MCF 10A (cell line): ENCODE measurements at regions of chr19 and their contacts with region 1.

Region 1: DNA sequence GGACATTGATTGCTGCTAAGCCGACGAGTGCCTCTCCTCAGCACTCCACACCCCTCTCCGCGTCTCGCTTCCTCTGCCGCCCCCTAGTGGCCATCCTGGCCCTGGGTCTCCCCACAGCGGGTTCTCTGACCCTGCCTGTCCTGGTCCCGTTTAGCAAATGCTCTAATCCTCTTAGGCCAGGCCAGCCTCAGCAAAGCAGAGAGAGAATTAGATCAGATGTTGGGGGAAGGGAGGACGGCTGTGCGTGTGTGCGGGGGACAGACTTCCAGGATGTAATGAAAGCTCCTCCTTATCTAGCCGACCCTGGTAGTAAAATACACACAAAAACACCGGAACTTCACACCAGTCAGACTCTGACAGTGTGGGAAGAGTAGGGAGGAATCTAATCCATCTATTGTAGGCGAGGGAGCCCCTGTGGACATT is 4.5 kb downstream of the TPRX2 start:
- DNase-seq: peak; percentile 85
- H3K4me3 Mint-ChIP-seq: no peak overlapping the region
- H3K27ac Mint-ChIP-seq: no peak overlapping the region
- H3K4me1 Mint-ChIP-seq: no peaks in the 10 kb centered on the region
- H3K27me3 Mint-ChIP-seq: no peaks in the 10 kb centered on the region
- CTCF ChIP-seq: peak; percentile 93

Region 2: DNA sequence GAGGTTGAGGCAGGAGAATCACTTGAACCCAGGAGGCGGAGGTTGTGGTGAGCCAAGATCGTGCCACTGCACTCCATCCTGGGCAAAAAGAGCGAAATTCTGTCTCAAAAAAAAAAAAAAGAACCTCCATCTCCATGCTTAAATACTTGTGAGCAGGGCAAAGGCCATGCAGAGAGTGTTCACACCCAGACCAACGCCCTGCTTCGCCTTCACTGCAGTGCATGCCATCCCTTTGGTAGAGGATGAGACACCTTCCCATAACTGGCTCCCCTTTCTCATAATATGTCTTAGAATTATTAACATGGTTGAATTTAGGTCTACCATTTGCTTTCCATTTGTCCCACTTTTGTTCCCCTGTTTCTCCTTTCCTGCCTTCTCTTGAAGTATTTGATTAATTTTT is 647.9 kb before region 1 on chr19:
- CTCF ChIA-PET with region 1: no interaction called
- POLR2A ChIA-PET with region 1: no interaction called
- intact Hi-C with region 1: no loop called
- DNase-seq: no peak
- H3K4me3 Mint-ChIP-seq: no peak overlapping the region
- H3K27ac Mint-ChIP-seq: no peak overlapping the region
- H3K4me1 Mint-ChIP-seq: peaks cover 4% of the 10 kb centered on the region
- H3K27me3 Mint-ChIP-seq: no peaks in the 10 kb centered on the region
- CTCF ChIP-seq: no peak

Region 3: DNA sequence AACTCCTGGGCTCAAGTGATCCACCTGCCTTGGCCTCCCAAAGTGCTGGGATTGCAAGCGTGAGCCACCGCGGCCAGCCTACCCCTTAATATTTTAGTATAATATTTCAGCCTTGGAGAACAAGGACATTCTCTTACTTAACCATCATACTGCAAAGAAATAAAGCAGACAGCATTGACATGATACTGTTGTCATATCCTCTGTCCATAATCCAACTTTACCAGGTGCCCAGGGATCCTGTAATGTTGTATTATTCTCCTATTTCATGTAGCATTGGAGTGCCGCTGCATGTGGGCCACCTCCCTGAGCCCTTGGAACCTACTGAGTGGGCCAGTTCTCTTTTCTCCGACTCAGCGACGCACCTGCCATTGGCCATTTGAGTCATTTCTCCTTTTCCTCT is 171.7 kb before region 1 on chr19:
- CTCF ChIA-PET with region 1: no interaction called
- POLR2A ChIA-PET with region 1: no interaction called
- intact Hi-C with region 1: no loop called
- DNase-seq: no peak
- H3K4me3 Mint-ChIP-seq: no peak overlapping the region
- H3K27ac Mint-ChIP-seq: peak overlapping the region; percentile 46
- H3K4me1 Mint-ChIP-seq: no peaks in the 10 kb centered on the region
- H3K27me3 Mint-ChIP-seq: no peaks in the 10 kb centered on the region
- CTCF ChIP-seq: no peak

Region 4: DNA sequence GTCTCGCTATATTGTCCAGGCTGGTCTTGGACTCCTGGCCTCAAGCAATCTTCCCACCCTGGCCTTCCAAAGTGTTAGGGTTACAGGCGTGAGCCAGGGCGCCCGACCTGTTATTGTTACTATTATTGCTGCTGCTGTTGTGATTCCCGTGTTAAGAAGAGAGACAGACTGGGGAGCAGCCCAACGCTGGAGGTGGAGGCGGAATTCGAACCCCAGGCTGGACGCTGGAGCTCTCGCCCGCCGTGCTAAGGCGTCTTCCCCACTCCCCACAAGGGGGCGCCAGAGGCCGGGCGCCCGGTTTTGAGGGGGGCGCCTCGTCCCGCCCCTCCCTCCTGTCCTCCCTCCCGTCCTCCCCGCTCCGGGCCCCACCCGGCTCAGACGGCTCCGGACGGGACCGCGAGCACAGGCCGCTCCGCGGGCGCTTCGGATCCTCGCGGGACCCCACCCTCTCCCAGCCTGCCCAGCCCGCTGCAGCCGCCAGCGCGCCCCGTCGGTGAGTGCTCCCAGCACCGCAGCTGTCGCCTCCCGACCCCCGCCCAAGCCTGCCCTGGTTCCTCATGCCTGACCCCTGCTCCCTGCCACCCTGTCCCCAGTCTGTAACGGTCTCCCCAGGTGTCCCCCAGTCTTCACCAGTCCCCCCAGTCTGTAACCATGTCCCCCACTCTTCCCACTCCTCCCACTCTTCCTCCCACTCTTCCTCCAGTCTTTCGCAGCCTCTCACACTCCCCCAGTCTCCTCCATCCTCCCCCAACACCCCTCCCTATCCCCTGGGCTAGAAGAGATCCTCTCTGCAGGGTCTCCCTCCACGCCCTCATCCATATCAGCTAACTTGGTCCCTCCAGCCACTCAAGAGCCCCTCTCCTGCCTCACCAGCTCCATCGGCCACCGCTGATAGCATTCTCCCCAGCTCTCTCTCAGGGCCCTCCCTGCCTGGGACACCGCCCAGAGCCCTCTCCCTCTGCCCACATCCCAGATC is 150.2 kb before region 1 on chr19 and contains the start of gene EHD2:
- CTCF ChIA-PET with region 1: interaction called, 4 read pairs
- POLR2A ChIA-PET with region 1: no interaction called
- intact Hi-C with region 1: loop called (anchors 5 kb)
- DNase-seq: peak; percentile 81
- H3K4me3 Mint-ChIP-seq: peak within 1 kb of the TSS; percentile 90
- H3K27ac Mint-ChIP-seq: peak within 1 kb of the TSS; percentile 62
- H3K4me1 Mint-ChIP-seq: peaks cover 24% of the 10 kb centered on the region
- H3K27me3 Mint-ChIP-seq: no peaks in the 10 kb centered on the region
- CTCF ChIP-seq: peak; percentile 97
- total RNA-seq, gene EHD2: 88.8 and 104 TPM in 2 replicates

Region 5: DNA sequence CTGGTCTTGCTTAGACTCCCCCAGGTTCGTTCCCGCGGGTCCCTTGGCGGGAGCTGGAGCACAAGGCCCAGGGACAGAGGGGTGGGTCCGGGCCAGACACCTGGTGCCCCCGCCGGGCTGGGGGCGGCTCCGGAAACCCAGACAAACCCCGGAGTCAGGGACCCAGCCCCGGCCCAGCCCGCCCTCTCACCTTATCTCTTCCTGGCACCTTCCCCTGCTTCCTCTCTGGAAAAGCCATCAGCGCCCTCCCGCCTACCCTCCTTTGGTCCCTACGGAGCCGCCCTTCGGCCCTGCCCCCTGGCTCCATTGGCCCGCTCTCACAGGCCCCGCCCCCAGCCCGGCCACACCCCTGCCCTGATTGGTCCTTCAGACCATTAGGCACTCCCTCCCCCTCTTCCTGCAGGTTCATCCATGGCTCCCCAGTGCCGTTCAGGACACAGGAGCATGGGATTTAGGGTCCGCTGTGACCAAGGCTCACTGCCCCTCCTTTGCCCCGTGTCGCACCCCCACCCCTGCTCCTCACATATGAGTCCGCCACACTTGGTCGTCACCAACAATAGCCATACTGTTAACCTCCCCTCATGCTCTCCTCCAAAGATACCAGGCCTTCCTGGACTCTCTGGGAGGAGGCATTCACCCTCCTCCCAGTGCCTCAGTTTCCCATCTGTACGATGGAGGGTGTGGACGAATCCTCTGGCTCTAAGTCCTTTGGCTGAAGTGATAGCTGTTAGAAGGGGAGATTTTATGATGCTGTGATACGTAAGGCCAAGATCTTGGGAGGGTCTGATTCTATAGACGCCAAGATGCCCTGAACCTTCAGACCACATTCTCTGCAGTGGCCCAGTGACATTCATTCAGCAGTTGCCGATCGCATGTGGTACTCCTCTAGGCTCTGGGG is 133.3 kb before region 1 on chr19:
- CTCF ChIA-PET with region 1: no interaction called
- POLR2A ChIA-PET with region 1: no interaction called
- intact Hi-C with region 1: no loop called
- DNase-seq: peak; percentile 76
- H3K4me3 Mint-ChIP-seq: peak overlapping the region; percentile 76
- H3K27ac Mint-ChIP-seq: peak overlapping the region; percentile 83
- H3K4me1 Mint-ChIP-seq: peaks cover 43% of the 10 kb centered on the region
- H3K27me3 Mint-ChIP-seq: no peaks in the 10 kb centered on the region
- CTCF ChIP-seq: no peak